GM12878 (cell line): ENCODE measurements at regions of chr1 and their contacts with region 1.

Region 1: GRCh38 chr1:171313835-171314320 is at the start of gene FMO4:
- DNase-seq: peak; percentile 94
- ATAC-seq: peak; percentile 100
- H3K4me3 ChIP-seq: peak within 1 kb of the TSS; percentile 71
- H3K27ac ChIP-seq: peak within 1 kb of the TSS; percentile 53; the same call in 1 of the 2 replicates
- H3K4me1 ChIP-seq: 0 out of 2 replicates have a peak, but pooled peaks cover 6% of the 10 kb centered on the region
- H3K27me3 ChIP-seq: no peaks in the 10 kb centered on the region
- CTCF ChIP-seq: peak; percentile 72 to 90 (median 87)
- EP300 ChIP-seq: no peak; a peak in 1 of 4 replicates
- POLR2A ChIP-seq: peak; percentile 28; the same call in 1 of the 2 replicates
- RAD21 ChIP-seq: peak; percentile 72
- polyA plus RNA-seq, gene FMO4: 1.4 to 1.8 TPM

Region 2: DNA sequence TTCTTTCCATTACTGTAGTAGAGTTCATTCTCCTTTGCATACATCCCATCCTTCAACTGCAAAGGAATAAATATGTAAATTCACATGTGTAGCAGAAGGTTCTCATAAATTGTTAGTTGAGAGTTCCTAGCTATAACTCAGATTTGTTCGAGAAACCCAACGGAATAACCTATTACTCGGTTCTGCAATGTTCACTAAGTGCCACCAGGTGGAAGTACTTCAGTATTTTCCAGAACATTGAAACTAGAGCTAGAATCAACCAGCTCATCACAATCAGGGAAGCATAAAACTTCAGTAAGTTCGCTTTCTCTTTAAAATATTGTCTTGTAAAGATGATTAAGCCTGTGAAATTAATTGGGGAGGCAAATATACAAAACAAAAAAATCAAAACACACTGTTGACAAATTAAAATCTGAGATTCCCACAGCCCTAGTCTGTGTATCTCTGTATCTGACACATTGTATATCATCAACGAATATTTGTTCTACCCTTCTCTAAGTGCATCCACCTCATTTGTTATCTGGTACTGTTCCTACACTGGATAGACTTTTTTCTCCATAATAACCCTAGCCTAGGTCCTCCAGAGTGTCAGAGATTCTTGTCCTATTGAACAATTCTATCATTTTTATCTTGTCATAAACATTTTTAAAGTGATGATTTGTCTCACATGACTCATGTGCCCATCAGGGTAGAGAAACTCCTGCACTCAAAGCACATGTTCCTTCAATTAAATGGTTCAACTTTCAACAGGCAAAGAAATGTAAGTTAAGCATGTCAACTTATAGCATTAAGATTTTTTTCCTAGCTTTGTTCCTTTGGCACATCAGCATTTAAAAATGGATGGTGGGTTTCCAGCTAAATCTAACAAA is 346.6 kb before region 1 on chr1:
- CTCF ChIA-PET with region 1: interaction called, 76 read pairs
- POLR2A ChIA-PET with region 1: interaction called, 3 read pairs
- RAD21 ChIA-PET with region 1: interaction called, 34 read pairs
- SMC1A ChIA-PET with region 1: interaction called, 43 read pairs
- in situ Hi-C with region 1: no loop called
- intact Hi-C with region 1: loop called (anchors 1 kb)
- DNase-seq: no peak
- ATAC-seq: peak; percentile 76
- H3K4me3 ChIP-seq: no peak overlapping the region
- H3K27ac ChIP-seq: no peak overlapping the region
- H3K4me1 ChIP-seq: no peaks in the 10 kb centered on the region
- H3K27me3 ChIP-seq: no peaks in the 10 kb centered on the region; a peak in 1 of 4 replicates
- CTCF ChIP-seq: peak; percentile 47 to 52 (median 49); a peak in 5 of 6 replicates
- EP300 ChIP-seq: no peak
- POLR2A ChIP-seq: no peak
- RAD21 ChIP-seq: peak; percentile 54

Region 3: GRCh38 chr1:171188388-171189266 is 125.3 kb before region 1 on chr1:
- CTCF ChIA-PET with region 1: interaction called, 14 read pairs
- POLR2A ChIA-PET with region 1: no interaction called
- RAD21 ChIA-PET with region 1: interaction called, 6 read pairs
- SMC1A ChIA-PET with region 1: interaction called, 3 read pairs
- in situ Hi-C with region 1: no loop called
- intact Hi-C with region 1: no loop called
- DNase-seq: peak; percentile 5
- ATAC-seq: peak; percentile 94
- H3K4me3 ChIP-seq: no peak overlapping the region
- H3K27ac ChIP-seq: no peak overlapping the region
- H3K4me1 ChIP-seq: no peaks in the 10 kb centered on the region
- H3K27me3 ChIP-seq: no peaks in the 10 kb centered on the region
- CTCF ChIP-seq: peak; percentile 68 to 87 (median 81)
- EP300 ChIP-seq: no peak
- POLR2A ChIP-seq: no peak
- RAD21 ChIP-seq: peak; percentile 68

Region 4: DNA sequence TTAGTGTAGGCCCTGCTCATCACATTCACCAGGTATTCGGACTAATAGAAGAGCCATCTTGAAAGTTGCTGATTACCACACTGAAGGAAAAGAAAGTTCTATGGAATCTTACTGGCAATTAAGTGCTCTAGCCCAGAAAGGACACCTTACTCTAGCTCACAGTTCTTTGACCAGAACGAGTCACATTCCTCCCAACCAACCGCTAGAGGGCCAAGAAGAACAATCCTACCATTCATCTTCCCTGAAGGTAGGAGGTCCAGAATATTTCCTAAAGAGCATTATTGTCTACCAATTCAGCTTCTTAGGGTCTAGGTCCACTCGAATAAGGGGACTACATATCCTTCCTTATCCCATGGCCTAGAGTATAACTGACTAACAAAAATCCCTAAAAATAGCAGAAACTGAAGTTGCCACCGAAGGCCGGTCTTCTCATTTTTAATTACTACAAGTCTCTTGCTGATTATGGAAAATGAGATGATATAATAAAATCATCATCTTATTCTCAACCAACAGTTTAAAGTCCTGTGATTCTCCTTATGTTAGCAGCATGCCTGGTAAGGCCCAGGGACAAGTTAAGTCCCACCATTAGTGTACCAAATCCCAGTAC is 68.3 kb before region 1 on chr1:
- CTCF ChIA-PET with region 1: interaction called, 162 read pairs
- POLR2A ChIA-PET with region 1: interaction called, 5 read pairs
- RAD21 ChIA-PET with region 1: interaction called, 46 read pairs
- SMC1A ChIA-PET with region 1: interaction called, 60 read pairs
- in situ Hi-C with region 1: no loop called
- intact Hi-C with region 1: loop called (anchors 1 kb)
- DNase-seq: no peak
- ATAC-seq: peak; percentile 88
- H3K4me3 ChIP-seq: no peak overlapping the region
- H3K27ac ChIP-seq: no peak overlapping the region
- H3K4me1 ChIP-seq: no peaks in the 10 kb centered on the region
- H3K27me3 ChIP-seq: 0 out of 4 replicates have a peak, but pooled peaks cover 0 to 3% of the 10 kb centered on the region in 2 experiments
- CTCF ChIP-seq: peak; percentile 67 to 90 (median 83)
- EP300 ChIP-seq: no peak
- POLR2A ChIP-seq: no peak
- RAD21 ChIP-seq: peak; percentile 49

Region 5: GRCh38 chr1:171329251-171329650 is 15.4 kb after region 1 on chr1:
- CTCF ChIA-PET with region 1: interaction called, 11 read pairs
- POLR2A ChIA-PET with region 1: no interaction called
- RAD21 ChIA-PET with region 1: no interaction called
- SMC1A ChIA-PET with region 1: interaction called, 5 read pairs
- in situ Hi-C with region 1: no loop called
- intact Hi-C with region 1: no loop called
- DNase-seq: no peak
- ATAC-seq: no peak
- H3K4me3 ChIP-seq: no peak overlapping the region
- H3K27ac ChIP-seq: no peak overlapping the region
- H3K4me1 ChIP-seq: no peaks in the 10 kb centered on the region
- H3K27me3 ChIP-seq: no peaks in the 10 kb centered on the region
- CTCF ChIP-seq: no peak
- EP300 ChIP-seq: no peak
- POLR2A ChIP-seq: no peak
- RAD21 ChIP-seq: no peak